CD4-positive, alpha-beta memory T cell (primary cell): ENCODE measurements at regions of chr17 and their contacts with region 1.

Region 1: DNA sequence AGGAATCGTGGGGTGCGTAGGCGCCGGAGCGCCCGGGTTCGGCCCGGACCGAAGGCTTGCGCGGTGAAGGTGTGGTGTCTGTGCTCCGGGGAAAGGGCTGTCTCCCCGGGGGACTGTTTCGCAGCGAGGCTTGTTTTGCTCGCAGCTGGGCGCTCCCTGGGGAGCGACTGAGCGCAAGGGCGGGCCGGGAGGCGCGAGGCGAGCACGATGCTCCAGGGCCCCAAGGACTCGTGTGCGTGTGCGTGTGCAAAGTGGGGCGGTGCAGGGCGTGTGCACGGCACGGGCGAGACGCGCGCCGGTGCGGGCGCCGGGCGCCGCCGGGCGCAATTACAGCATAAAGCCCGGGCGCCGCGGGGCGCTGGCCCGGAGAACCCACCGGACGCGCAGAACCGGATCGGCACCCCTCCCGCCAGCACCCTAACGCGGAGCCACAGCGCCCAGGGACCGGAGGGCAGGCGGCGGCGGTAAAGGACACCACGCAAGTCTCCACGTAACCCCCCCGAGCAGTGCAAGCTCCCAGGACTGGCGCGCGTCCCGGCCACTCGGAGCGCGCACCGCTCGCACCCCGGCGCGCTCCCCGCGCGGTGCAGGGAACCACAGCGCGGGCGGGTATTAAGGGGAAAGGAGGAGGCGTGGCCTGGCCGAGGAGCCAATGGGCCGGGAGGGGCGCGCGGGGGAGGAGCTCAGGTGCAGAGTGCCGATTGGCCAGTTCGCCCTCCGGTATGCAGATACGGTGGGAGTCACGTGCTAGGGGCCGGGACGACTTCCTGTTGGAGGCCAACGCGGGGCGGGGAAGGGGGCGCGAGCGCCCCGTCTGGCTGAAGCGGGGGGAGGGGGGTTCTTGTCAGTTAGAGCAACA is at the start of gene TNRC6C:
- DNase-seq: peak; percentile 99 to 100 (median 100)
- H3K4me3 ChIP-seq: peak within 1 kb of the TSS; percentile 80 to 92
- H3K4me3 Mint-ChIP-seq: peak within 1 kb of the TSS; percentile 93 to 100 (median 98)
- H3K27ac ChIP-seq: peak within 1 kb of the TSS; percentile 68
- H3K27ac Mint-ChIP-seq: peak within 1 kb of the TSS; percentile 91 to 97 (median 95)
- H3K4me1 ChIP-seq: peaks cover 42% of the 10 kb centered on the region
- H3K4me1 Mint-ChIP-seq: peaks cover 25 to 51% (median 38%) of the 10 kb centered on the region in 4 donors
- H3K27me3 ChIP-seq: no peaks in the 10 kb centered on the region
- H3K27me3 Mint-ChIP-seq: peaks cover 0 to 4% of the 10 kb centered on the region in 2 donors
- total RNA-seq, gene TNRC6C: 105 to 112 TPM

Region 2: DNA sequence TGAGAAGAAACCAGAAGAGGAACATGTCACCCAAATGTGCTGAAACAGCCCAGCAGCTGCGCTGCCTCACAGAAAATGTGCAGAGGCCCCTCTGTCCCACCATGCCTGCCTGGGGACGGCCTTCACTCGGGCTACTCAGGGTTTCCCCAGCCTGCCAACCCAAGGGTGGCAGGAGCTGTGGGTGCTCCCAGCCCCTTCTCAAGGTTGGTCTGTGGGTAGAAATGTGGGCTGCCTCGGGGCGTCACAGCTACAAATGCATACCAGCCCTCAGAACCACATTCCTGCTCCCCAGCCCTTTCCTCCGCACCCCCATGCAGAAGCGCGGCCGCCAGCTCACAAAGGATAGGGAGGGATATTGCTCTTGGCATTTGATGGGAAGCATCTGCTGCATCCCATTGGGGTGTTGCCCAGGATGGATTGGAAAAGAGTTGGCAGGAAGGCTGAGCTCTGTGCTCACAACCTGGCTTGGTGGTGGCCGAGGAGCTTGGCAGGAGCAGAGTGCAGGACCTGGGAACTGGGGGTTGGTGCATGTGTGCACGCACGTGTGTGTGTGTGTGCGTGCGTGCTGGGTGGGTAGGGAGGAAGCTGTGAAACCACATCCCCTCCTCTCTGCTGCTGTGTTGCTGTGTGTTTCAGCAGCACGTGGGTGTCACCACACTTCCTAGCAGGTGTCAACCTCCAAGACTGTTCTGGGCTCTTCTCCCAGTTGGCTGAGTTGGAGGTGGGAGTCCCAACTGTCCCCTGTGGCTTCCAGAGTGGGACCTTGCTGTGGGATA is 512.9 kb before region 1 on chr17:
- CTCF ChIA-PET with region 1: no interaction called
- POLR2A ChIA-PET with region 1: interaction called, 14 read pairs
- intact Hi-C with region 1: no loop called
- DNase-seq: peak; percentile 92 to 95 (median 94)
- H3K4me3 ChIP-seq: peak overlapping the region; percentile 54 to 64
- H3K4me3 Mint-ChIP-seq: peak overlapping the region; percentile 73 to 89 (median 86)
- H3K27ac ChIP-seq: peak overlapping the region; percentile 90
- H3K27ac Mint-ChIP-seq: peak overlapping the region; percentile 90 to 99 (median 99)
- H3K4me1 ChIP-seq: peaks cover 100% of the 10 kb centered on the region
- H3K4me1 Mint-ChIP-seq: peaks cover 65 to 99% (median 89%) of the 10 kb centered on the region in 4 donors
- H3K27me3 ChIP-seq: no peaks in the 10 kb centered on the region
- H3K27me3 Mint-ChIP-seq: no peaks in the 10 kb centered on the region

Region 3: GRCh38 chr17:77690271-77691161 is 267.6 kb before region 1 on chr17:
- CTCF ChIA-PET with region 1: no interaction called
- POLR2A ChIA-PET with region 1: interaction called, 10 read pairs
- intact Hi-C with region 1: no loop called
- DNase-seq: peak in 3 of 5 donors; percentile 16 to 18 (median 18)
- H3K4me3 ChIP-seq: peak overlapping the region in 1 of 2 donors; percentile 24
- H3K4me3 Mint-ChIP-seq: peak overlapping the region; percentile 48 to 78 (median 68)
- H3K27ac ChIP-seq: no peak overlapping the region
- H3K27ac Mint-ChIP-seq: peak overlapping the region in 3 of 7 donors; percentile 12 to 59 (median 29)
- H3K4me1 ChIP-seq: peaks cover 30% of the 10 kb centered on the region
- H3K4me1 Mint-ChIP-seq: peaks cover 20 to 47% (median 35%) of the 10 kb centered on the region in 4 donors
- H3K27me3 ChIP-seq: no peaks in the 10 kb centered on the region
- H3K27me3 Mint-ChIP-seq: peaks cover 7 to 9% of the 10 kb centered on the region in 2 donors

Region 4: GRCh38 chr17:77869665-77870132 is 88.4 kb before region 1 on chr17:
- CTCF ChIA-PET with region 1: no interaction called
- POLR2A ChIA-PET with region 1: interaction called, 30 read pairs
- intact Hi-C with region 1: no loop called
- DNase-seq: no peak
- H3K4me3 ChIP-seq: no peak overlapping the region
- H3K4me3 Mint-ChIP-seq: peak overlapping the region in 7 of 8 donors; percentile 1 to 78 (median 72)
- H3K27ac ChIP-seq: no peak overlapping the region
- H3K27ac Mint-ChIP-seq: peak overlapping the region in 6 of 7 donors; percentile 24 to 87 (median 46)
- H3K4me1 ChIP-seq: peaks cover 45% of the 10 kb centered on the region
- H3K4me1 Mint-ChIP-seq: peaks cover 35 to 70% (median 45%) of the 10 kb centered on the region in 4 donors
- H3K27me3 ChIP-seq: no peaks in the 10 kb centered on the region
- H3K27me3 Mint-ChIP-seq: no peaks in the 10 kb centered on the region

Region 5: DNA sequence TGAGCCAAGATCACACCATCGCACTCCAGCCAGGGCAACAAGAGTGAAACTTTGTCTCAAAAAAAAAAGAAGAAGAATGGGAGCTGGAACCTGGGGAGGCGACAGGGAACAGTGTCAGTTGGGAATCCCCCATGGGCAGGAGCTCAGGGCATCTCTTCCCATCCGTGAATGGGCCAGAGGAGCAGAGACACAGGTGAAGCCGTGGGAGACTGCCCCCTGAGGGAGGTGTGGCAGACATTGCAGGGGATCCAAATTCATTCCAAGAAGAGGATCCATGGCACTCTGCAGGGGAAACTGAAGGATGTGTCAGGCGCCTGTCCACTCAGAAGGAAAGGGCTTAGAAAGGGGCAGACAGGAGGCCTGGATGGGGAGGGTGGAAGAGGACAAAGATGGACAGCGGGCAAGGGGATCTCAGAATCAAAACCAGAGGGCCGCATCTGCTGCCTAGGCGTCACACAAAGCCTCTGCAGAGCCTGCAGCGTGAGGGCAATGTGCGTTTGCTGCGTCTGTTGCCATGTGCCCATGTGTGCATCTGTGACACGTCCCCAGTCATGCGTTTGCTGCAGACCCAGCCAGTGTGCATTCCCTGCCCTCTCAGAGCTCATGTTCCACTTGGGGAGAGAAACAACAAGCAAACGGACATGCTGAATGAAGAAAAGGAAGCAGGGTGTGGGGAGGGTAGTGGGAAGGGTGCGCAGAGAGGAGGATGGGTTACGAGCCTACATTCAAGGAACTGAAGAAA is 30.1 kb before region 1 on chr17:
- CTCF ChIA-PET with region 1: interaction called, 4 read pairs
- POLR2A ChIA-PET with region 1: interaction called, 17 read pairs
- intact Hi-C with region 1: no loop called
- DNase-seq: no peak
- H3K4me3 ChIP-seq: no peak overlapping the region
- H3K4me3 Mint-ChIP-seq: peak overlapping the region in 2 of 8 donors; percentile 47 to 54
- H3K27ac ChIP-seq: no peak overlapping the region
- H3K27ac Mint-ChIP-seq: peak overlapping the region in 4 of 7 donors; percentile 26 to 85 (median 66)
- H3K4me1 ChIP-seq: peaks cover 20% of the 10 kb centered on the region
- H3K4me1 Mint-ChIP-seq: peaks cover 11 to 42% (median 18%) of the 10 kb centered on the region in 4 donors
- H3K27me3 ChIP-seq: no peaks in the 10 kb centered on the region
- H3K27me3 Mint-ChIP-seq: no peaks in the 10 kb centered on the region

Region 6: DNA sequence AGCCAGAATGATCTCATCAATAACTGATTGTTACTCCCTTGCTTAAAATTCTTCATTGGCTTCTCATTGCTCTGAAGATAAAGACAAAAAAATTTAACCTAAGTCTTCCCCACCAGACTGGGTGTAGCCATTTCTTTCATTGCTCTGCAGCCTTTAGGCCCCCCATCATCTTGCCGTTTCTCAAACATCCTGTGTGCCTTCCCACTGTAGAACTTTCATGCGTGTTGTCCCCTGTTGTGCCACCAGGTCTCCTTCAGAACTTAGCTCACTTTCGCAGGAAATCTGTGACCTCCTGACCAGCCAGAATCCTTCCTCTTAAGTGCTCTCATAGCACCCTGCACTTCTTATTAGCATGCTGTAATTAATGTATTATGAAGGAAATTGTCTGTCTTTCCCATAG is 32.2 kb after region 1 on chr17:
- CTCF ChIA-PET with region 1: interaction called, 5 read pairs
- POLR2A ChIA-PET with region 1: interaction called, 12 read pairs
- intact Hi-C with region 1: no loop called
- DNase-seq: no peak
- H3K4me3 ChIP-seq: no peak overlapping the region
- H3K4me3 Mint-ChIP-seq: peak overlapping the region in 1 of 8 donors; percentile 0
- H3K27ac ChIP-seq: no peak overlapping the region
- H3K27ac Mint-ChIP-seq: peak overlapping the region in 4 of 7 donors; percentile 4 to 17 (median 12)
- H3K4me1 ChIP-seq: peaks cover 28% of the 10 kb centered on the region
- H3K4me1 Mint-ChIP-seq: peaks cover 46 to 66% (median 58%) of the 10 kb centered on the region in 4 donors
- H3K27me3 ChIP-seq: no peaks in the 10 kb centered on the region
- H3K27me3 Mint-ChIP-seq: no peaks in the 10 kb centered on the region